Activated T-helper 2 cell treated with anti-CD3 and anti-CD28 coated beads, Interferon-gamma antibody, Interleukin-2, Interleukin-4, amounts not matched to agents 10 μg/mL and 5 μg/mL and 100 μg/mL, durations not matched to agents 14 hours and 24 hours and 36 hours (primary cell): ENCODE measurements at regions of chr1 and their contacts with region 1.

Region 1: GRCh38 chr1:66374561-66375111 is 159.3 kb upstream of the SGIP1 start:
- DNase-seq: no peak
- H3K4me3 Mint-ChIP-seq: peak overlapping the region; percentile 63
- H3K27ac Mint-ChIP-seq: peak overlapping the region; percentile 96
- H3K4me1 Mint-ChIP-seq: peaks cover 60% of the 10 kb centered on the region
- H3K27me3 Mint-ChIP-seq: no peaks in the 10 kb centered on the region

Region 2: DNA sequence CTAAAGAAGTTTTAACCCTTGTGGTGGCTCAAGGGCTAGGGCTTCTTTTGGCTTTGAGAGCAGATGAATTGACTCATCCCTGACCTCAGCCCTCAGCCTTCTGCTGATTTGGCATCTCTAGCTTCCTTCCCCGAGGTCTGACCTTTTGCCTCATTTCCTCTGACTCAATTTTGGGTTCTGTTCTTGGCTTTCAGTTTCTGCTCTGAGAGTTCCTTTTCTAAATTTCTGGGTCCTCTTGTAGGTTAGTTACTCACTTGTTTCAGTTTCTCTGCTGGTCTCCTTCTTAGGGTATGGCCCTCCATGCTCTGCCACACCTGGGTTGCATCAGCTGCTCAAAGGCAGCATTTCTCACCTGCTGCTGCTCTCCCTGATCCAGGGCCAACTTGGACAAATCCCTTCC is 562.6 kb before region 1 on chr1:
- intact Hi-C with region 1: loop called (anchors 2 kb)
- DNase-seq: peak; percentile 72
- H3K4me3 Mint-ChIP-seq: no peak overlapping the region
- H3K27ac Mint-ChIP-seq: peak overlapping the region; percentile 38
- H3K4me1 Mint-ChIP-seq: peaks cover 35% of the 10 kb centered on the region
- H3K27me3 Mint-ChIP-seq: peaks cover 20% of the 10 kb centered on the region

Region 3: DNA sequence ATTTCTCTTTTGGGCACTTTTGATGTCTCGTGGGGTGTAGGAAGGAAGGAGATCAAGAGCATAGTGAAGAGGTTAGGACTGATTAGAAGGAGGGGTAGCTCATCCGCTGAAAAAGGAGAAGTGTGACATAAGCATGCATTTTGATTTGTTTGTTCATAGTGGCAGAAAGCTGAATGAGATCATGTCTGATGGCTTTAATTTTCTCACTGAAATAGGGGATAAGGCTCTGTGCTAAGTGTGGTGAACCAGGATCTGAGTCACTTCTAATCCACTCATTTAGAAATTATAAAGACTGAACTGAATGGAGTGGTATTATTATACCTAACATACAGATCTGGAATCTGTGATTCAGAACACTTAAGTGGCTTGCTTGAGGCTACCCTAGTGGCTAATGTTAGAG is 237.4 kb before region 1 on chr1:
- intact Hi-C with region 1: no loop called
- DNase-seq: no peak
- H3K4me3 Mint-ChIP-seq: no peak overlapping the region
- H3K27ac Mint-ChIP-seq: no peak overlapping the region
- H3K4me1 Mint-ChIP-seq: peaks cover 4% of the 10 kb centered on the region
- H3K27me3 Mint-ChIP-seq: no peaks in the 10 kb centered on the region

Region 4: DNA sequence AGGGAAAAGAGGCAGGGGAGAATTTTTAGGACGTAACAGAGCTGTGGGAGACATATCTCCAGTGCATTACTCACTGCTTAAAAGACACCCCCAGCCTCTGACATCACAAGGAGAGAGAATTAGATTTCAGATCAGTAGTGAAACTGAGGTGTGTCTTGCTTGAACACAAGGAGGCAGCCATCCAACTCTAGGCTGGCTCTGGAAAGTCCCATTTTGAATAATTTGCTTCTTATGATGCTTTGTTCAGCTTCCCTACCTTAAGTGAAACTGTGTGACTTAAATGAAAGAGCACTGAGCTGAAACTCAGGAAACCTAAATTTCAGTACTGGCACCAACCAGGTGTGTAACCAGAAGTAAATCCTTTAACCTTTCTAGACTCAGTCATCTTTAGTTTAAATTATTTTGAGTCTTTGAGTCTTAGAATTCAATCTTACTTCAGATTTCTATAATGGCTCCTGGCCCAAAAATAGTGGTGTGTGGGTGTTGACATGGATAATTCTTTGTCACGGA is 92.2 kb before region 1 on chr1:
- intact Hi-C with region 1: loop called (anchors 1 kb)
- DNase-seq: peak; percentile 60
- H3K4me3 Mint-ChIP-seq: peak overlapping the region; percentile 35
- H3K27ac Mint-ChIP-seq: peak overlapping the region; percentile 86
- H3K4me1 Mint-ChIP-seq: peaks cover 69% of the 10 kb centered on the region
- H3K27me3 Mint-ChIP-seq: peaks cover 19% of the 10 kb centered on the region

Region 5: DNA sequence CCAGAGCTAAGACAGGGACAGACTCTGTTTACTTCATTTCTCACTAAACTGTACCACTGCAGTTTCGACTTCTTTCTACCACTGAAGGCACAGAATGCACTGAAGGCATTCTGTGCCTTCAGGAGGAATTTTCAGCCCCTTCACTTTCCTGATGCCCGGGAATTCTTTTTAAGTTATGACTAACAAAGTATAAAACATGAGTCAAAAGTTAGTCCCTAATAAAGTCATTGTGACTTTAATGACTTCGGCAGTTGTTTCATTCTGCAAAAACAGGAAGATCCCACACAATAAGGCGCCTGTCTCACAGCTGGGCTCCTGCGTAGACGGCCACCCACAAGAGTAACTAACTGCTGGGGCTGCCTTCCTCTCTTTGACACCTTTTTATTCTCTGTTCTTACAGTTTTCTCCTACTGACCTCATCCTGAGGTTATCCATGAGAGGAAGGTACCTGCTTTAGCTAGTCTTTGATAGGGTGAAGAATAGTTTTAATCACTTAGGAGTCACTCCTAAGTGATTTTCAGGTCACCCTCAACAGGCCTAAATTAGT is 24.6 kb before region 1 on chr1:
- intact Hi-C with region 1: loop called (anchors 1 kb)
- DNase-seq: no peak
- H3K4me3 Mint-ChIP-seq: peak overlapping the region; percentile 47
- H3K27ac Mint-ChIP-seq: peak overlapping the region; percentile 72
- H3K4me1 Mint-ChIP-seq: peaks cover 68% of the 10 kb centered on the region
- H3K27me3 Mint-ChIP-seq: no peaks in the 10 kb centered on the region

Region 6: DNA sequence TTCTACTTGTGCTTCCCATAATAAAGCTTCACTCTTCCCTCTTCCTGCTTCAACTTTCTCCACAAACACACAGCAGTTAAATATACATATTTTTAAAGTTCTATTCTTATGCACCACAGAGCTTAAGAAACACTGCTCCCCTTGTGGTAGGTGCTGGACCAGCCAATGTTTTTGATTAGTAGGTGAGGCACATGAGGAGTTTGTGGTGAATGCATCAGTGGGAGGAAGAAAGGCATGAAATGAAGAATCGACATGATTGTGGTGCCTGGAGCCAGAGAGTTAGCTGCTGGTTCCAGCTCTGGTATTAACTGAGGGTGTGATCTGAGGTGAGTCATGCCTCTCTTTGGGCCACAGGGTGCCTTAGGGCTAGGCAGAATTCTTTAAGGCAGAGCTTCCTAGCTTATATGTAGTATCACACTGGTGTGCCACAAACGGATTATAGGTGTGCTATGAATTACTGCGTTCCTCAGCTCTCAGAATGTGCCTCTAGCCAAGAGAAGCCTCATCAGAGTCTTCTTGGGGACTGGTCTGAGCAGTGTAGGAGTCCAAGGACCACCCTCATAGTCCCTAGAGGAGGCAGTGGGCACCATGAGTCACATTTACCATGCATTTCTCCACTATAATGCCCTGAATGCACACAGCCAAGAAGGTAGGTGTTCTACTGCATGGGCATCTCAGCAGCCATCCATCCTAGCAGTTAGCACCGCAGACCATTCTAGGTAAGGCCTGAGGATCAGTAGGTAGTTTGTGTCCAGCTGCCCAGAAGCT is 61.9 kb after region 1 on chr1:
- intact Hi-C with region 1: loop called (anchors 1 kb)
- DNase-seq: peak; percentile 31
- H3K4me3 Mint-ChIP-seq: no peak overlapping the region
- H3K27ac Mint-ChIP-seq: no peak overlapping the region
- H3K4me1 Mint-ChIP-seq: peaks cover 32% of the 10 kb centered on the region
- H3K27me3 Mint-ChIP-seq: peaks cover 5% of the 10 kb centered on the region

Region 7: GRCh38 chr1:67339623-67340343 is 965.1 kb after region 1 on chr1:
- intact Hi-C with region 1: loop called (anchors 10 kb)
- DNase-seq: no peak
- H3K4me3 Mint-ChIP-seq: no peak overlapping the region
- H3K27ac Mint-ChIP-seq: peak overlapping the region; percentile 89
- H3K4me1 Mint-ChIP-seq: peaks cover 78% of the 10 kb centered on the region
- H3K27me3 Mint-ChIP-seq: no peaks in the 10 kb centered on the region